Left colon (tissue), 2 donors: ENCODE measurements at regions of chr7 and their contacts with region 1.

Region 1: DNA sequence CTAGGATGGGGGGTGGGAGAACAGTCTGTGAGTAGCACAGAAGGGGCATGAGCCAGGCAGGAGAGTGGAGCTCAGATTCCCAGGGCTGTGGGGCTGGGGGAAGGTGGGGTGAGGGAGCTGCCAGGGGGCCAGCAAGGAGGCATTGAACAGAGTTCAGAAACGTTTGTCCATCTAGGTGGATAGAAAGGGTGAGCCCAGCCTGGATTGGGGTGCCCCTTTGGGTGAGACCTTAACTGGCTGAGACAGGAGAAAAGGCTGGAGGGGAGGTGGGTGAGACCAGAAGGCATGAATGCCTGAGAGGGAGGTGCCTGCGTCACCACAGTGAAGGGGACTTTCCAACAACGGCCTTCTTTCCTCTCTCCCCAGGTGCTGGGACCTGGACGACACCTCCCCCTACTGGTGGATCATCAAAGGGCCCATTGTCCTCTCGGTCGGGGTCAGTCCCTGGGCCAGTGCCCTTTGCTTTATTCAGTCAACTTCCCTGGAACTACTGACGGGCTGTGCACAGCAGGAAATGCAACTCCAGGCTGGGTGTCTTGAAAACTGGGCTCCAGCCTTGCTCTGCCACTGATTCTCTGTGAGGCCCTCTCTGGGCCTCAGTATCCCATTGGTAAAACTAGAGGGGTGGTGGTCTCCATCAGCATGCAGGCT is 11.0 kb downstream of the GHRHR start:
- DNase-seq: peak; percentile 74 to 76
- ATAC-seq: peak; percentile 92

Region 2: GRCh38 chr7:30800785-30801252 is 173.9 kb before region 1 on chr7:
- intact Hi-C with region 1: loop called in 1 of 2 experiments (anchors 5 kb)
- DNase-seq: peak in 1 of 2 donors; percentile 40
- ATAC-seq: peak; percentile 69